HEK293 (cell line): ENCODE measurements at regions of chr5 and their contacts with region 1.

Region 1: GRCh38 chr5:81751009-81751835 is at the start of gene SSBP2:
- H3K4me3 ChIP-seq: peak within 1 kb of the TSS; percentile 95
- H3K27ac ChIP-seq: peak within 1 kb of the TSS; percentile 86
- H3K4me1 ChIP-seq: 0 out of 2 replicates have a peak, but pooled peaks cover 6% of the 10 kb centered on the region
- CTCF ChIP-seq: peak; percentile 40; the same call in 1 of the 2 replicates

Region 2: GRCh38 chr5:81851481-81852178 is 100.4 kb after region 1 on chr5:
- CTCF ChIA-PET with region 1: interaction called, 9 read pairs
- POLR2A ChIA-PET with region 1: interaction called, 142 read pairs
- H3K4me3 ChIP-seq: peak overlapping the region; percentile 41
- H3K27ac ChIP-seq: peak overlapping the region; percentile 91
- H3K4me1 ChIP-seq: peaks cover 8% of the 10 kb centered on the region
- CTCF ChIP-seq: no peak